ENCODE measurements at regions of chr11 and their contacts with region 1.

Region 1: DNA sequence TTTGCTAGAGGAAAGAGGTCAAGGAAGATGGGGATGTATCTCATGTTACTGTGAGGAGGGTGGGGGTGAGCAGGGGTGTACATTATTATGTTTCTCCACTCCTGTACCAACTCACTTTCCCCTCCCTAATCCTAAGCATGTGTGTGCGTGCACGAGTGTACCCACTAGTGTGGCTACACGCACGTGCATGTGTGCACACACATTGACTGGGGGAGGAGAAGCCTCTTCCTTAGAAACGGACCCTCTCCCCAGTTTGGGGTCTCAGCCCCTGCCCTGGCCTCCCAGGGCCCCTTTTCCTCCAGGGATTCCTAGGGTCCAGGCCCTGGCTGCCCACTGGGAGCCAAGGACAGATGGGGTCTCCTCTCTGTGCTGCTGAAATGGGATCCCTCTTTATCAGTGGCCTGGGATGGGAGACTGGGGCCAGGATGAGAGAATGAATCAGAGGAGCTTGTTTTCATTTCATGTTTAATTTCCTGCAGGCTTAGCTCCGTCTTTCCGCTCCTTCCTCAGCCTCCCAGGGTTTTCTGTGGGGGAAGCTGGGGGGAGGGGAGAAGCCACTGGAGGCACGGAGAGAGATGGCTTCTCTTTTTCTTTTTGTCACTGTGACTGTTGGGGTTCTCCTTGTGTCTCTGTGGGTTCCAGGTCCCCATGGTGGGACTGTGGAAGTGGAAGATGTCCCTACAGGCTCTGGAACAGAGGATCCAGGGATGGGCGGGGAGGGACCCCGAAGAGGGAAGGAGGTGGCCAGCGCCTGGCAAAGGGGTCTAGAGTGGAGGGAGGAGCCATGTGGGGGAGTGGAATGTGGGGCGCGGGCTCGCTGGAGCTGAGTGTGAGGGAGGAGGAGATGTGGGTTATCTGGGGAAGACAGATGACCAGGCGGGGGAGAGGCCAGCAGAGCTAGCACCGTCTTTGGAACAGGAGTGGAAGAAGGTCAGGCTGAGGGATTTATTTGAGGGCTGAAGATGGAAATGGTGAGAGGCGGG is 40.3 kb downstream of the ALX4 start:
- DNase-seq: no peak
- H3K4me3 ChIP-seq: no peak overlapping the region
- H3K27ac ChIP-seq: no peak overlapping the region
- H3K4me1 ChIP-seq: no peaks in the 10 kb centered on the region
- H3K27me3 ChIP-seq: no peaks in the 10 kb centered on the region
- CTCF ChIP-seq: no peak

Region 2: GRCh38 chr11:44309483-44310205 is 40.0 kb after region 1 on chr11 and contains the start of gene ALX4:
- CTCF ChIA-PET with region 1: no interaction called
- dilution Hi-C with region 1: loop called (anchors 5 kb)
- in situ Hi-C with region 1: no loop called
- intact Hi-C with region 1: no loop called
- DNase-seq: peak; percentile 43
- H3K4me3 ChIP-seq: peak within 1 kb of the TSS; percentile 7 to 50 (median 45)
- H3K27ac ChIP-seq: no peak within 1 kb of the TSS
- H3K4me1 ChIP-seq: peaks cover 18% of the 10 kb centered on the region
- H3K27me3 ChIP-seq: peaks cover 31% of the 10 kb centered on the region
- CTCF ChIP-seq: no peak
- total RNA-seq, gene ALX4: under 0.01 TPM in 1 of 2 donors, not detected in the other